IMR-90 (cell line): ENCODE measurements at regions of chr20 and their contacts with region 1.

Region 1: DNA sequence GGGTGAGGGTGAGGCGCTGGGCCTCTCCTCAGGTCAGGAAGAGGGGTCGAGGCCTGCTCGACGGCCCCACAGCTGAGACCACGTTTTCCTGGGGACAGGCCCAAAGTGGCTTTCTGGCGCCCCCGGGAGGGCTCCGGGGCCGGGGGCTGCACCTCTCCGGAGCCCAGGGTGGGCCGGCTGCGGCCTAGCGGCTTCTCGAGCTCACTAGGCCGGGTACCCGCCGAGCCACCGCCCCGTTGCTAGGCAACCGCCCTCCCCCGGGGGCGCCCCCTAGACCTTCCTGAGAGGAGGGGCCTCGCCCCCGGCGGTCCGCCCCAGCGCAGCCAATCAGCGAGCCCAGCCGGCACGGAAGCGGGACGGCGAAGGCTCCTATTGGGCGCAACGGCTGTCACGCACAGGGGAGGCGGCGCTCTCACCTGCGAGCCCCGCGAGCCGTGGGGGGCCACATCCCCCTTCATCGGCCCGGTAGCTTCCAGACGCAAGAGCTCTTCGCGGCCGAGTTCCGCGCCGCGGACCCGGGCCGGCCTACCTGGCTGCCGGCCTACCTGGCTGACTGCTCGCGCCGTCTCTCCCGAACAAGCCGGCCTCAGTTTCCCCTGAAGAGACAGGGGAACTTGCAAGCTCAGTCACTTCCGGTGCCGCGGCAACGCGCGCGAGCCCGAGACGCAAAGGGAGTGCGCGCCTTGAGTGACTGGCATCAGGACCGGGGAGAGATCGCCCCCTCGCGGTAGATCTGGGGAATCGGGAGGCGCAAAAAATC is 831 bp upstream of the BCL2L1 start:
- DNase-seq: peak; percentile 98
- ATAC-seq: peak; percentile 93
- H3K4me3 ChIP-seq: peak overlapping the region; percentile 75
- H3K27ac ChIP-seq: peak overlapping the region; percentile 85
- H3K4me1 ChIP-seq: peaks cover 16% of the 10 kb centered on the region
- H3K27me3 ChIP-seq: no peaks in the 10 kb centered on the region
- CTCF ChIP-seq: peak; percentile 99
- POLR2A ChIP-seq: peak; percentile 63
- RAD21 ChIP-seq: peak; percentile 97

Region 2: DNA sequence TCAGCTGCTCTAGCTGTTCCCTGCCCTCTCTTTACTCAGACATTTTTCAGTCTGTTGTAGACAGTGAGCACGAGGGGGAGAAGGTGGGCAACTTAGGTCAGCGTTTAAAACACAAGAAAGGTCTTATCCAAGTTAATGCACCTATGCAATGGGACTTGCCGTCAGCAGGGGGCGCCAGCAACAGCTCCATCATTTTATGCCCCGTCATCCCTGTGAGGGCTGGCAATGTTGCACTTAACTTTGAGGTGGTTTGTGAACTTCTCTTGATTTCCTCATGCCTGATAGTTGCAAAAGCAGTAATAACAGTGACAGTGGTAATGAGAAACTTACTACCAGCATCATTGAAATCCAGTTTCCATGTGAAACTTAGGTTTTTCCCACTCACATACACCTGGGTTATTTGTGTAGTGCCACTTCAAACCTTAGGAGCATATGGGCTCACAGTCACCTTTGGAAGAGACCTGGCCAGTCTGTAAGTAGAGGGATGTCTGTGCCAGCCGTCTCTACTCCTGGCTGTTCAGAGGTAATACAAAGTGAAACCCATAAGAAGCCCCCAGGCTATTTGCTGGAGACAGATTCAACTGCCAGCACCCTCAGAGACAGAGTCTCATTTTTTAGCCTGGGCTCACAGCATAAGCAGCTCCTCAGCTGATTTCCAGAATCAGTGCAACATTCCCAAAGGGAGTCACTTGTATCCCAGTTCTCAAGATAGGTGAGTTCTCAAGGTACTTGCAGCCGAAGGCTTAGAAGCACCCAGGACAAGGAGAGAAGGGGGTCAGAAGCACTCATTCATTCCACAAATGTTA is 163.2 kb before region 1 on chr20:
- CTCF ChIA-PET with region 1: no interaction called
- POLR2A ChIA-PET with region 1: no interaction called
- dilution Hi-C with region 1: no loop called
- in situ Hi-C with region 1: loop called (anchors 5 kb)
- intact Hi-C with region 1: loop called (anchors 2 kb)
- DNase-seq: peak; percentile 86
- ATAC-seq: peak; percentile 48
- H3K4me3 ChIP-seq: no peak overlapping the region
- H3K27ac ChIP-seq: peak overlapping the region; percentile 76
- H3K4me1 ChIP-seq: peaks cover 18% of the 10 kb centered on the region
- H3K27me3 ChIP-seq: no peaks in the 10 kb centered on the region
- CTCF ChIP-seq: peak; percentile 91
- POLR2A ChIP-seq: no peak; the same call in 1 of the 2 replicates
- RAD21 ChIP-seq: peak; percentile 60

Region 3: GRCh38 chr20:31630187-31630790 is 93.2 kb before region 1 on chr20:
- CTCF ChIA-PET with region 1: interaction called, 26 read pairs
- POLR2A ChIA-PET with region 1: no interaction called
- dilution Hi-C with region 1: no loop called
- in situ Hi-C with region 1: no loop called
- intact Hi-C with region 1: loop called (anchors 1 kb)
- DNase-seq: no peak
- ATAC-seq: no peak
- H3K4me3 ChIP-seq: no peak overlapping the region
- H3K27ac ChIP-seq: no peak overlapping the region
- H3K4me1 ChIP-seq: peaks cover 11% of the 10 kb centered on the region; the same call in 1 of the 2 replicates
- H3K27me3 ChIP-seq: no peaks in the 10 kb centered on the region
- CTCF ChIP-seq: no peak
- POLR2A ChIP-seq: no peak
- RAD21 ChIP-seq: no peak

Region 4: GRCh38 chr20:31641391-31641790 is 82.1 kb before region 1 on chr20:
- CTCF ChIA-PET with region 1: no interaction called
- POLR2A ChIA-PET with region 1: no interaction called
- dilution Hi-C with region 1: no loop called
- in situ Hi-C with region 1: no loop called
- intact Hi-C with region 1: no loop called
- DNase-seq: no peak
- ATAC-seq: no peak
- H3K4me3 ChIP-seq: no peak overlapping the region
- H3K27ac ChIP-seq: no peak overlapping the region
- H3K4me1 ChIP-seq: no peaks in the 10 kb centered on the region; the same call in 1 of the 2 replicates
- H3K27me3 ChIP-seq: peaks cover 23% of the 10 kb centered on the region
- CTCF ChIP-seq: no peak
- POLR2A ChIP-seq: no peak
- RAD21 ChIP-seq: no peak

Region 5: DNA sequence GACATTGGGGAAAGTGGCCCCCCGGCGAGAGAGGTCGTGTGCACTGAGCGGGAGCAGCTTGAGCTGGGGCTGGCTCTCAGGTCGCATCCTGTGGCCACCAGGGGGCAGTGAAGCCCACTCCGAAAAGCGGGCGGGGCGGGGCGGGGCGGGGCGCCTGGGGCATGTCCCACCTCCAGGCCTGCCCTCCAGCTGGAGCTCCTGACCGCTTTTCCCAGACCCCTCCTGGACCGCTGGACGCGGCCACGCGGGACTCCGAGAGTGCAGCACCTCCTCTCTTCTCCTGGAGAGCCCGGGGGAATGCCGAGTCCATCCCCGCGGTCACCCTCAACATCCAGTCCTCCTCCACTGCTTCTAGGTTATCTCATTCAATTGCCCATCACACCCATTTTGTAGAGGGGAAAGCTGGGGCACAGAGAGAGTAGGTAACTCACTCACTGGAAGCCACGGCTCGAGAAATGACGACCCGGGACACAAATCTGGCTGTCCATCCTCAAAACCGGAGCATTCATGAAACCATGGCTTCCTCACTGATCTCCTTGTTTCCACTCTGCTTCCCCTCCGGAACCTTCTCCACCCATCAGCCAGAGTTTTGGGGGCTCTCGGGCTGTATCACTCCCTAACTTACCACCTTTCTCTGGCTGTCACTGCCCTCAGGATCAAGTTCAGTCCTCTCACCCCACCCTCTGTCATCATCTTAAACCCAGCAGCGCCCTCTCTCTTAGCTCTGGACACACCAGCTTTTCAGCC is 61.7 kb before region 1 on chr20:
- CTCF ChIA-PET with region 1: interaction called, 59 read pairs
- POLR2A ChIA-PET with region 1: interaction called, 6 read pairs
- dilution Hi-C with region 1: no loop called
- in situ Hi-C with region 1: loop called (anchors 5 kb)
- intact Hi-C with region 1: loop called (anchors 1 kb)
- DNase-seq: peak; percentile 54
- ATAC-seq: peak; percentile 85
- H3K4me3 ChIP-seq: peak overlapping the region; percentile 43
- H3K27ac ChIP-seq: peak overlapping the region; percentile 56
- H3K4me1 ChIP-seq: peaks cover 17% of the 10 kb centered on the region
- H3K27me3 ChIP-seq: no peaks in the 10 kb centered on the region
- CTCF ChIP-seq: peak; percentile 69
- POLR2A ChIP-seq: no peak
- RAD21 ChIP-seq: peak; percentile 63

Region 6: GRCh38 chr20:31670371-31671228 is 52.9 kb before region 1 on chr20:
- CTCF ChIA-PET with region 1: interaction called, 3 read pairs
- POLR2A ChIA-PET with region 1: interaction called, 3 read pairs
- dilution Hi-C with region 1: no loop called
- in situ Hi-C with region 1: no loop called
- intact Hi-C with region 1: loop called (anchors 2 kb)
- DNase-seq: peak; percentile 75
- ATAC-seq: peak; percentile 88
- H3K4me3 ChIP-seq: no peak overlapping the region
- H3K27ac ChIP-seq: no peak overlapping the region
- H3K4me1 ChIP-seq: peaks cover 26% of the 10 kb centered on the region
- H3K27me3 ChIP-seq: no peaks in the 10 kb centered on the region
- CTCF ChIP-seq: no peak
- POLR2A ChIP-seq: no peak
- RAD21 ChIP-seq: no peak

Region 7: GRCh38 chr20:31699801-31700728 is 23.4 kb before region 1 on chr20:
- CTCF ChIA-PET with region 1: interaction called, 5 read pairs
- POLR2A ChIA-PET with region 1: interaction called, 22 read pairs
- dilution Hi-C with region 1: no loop called
- in situ Hi-C with region 1: no loop called
- intact Hi-C with region 1: no loop called
- DNase-seq: no peak
- ATAC-seq: no peak
- H3K4me3 ChIP-seq: no peak overlapping the region
- H3K27ac ChIP-seq: peak overlapping the region; percentile 97
- H3K4me1 ChIP-seq: peaks cover 34% of the 10 kb centered on the region
- H3K27me3 ChIP-seq: no peaks in the 10 kb centered on the region
- CTCF ChIP-seq: no peak
- POLR2A ChIP-seq: no peak
- RAD21 ChIP-seq: no peak